Caco-2 (cell line): ENCODE measurements at regions of chr1 and their contacts with region 1.

Region 1: DNA sequence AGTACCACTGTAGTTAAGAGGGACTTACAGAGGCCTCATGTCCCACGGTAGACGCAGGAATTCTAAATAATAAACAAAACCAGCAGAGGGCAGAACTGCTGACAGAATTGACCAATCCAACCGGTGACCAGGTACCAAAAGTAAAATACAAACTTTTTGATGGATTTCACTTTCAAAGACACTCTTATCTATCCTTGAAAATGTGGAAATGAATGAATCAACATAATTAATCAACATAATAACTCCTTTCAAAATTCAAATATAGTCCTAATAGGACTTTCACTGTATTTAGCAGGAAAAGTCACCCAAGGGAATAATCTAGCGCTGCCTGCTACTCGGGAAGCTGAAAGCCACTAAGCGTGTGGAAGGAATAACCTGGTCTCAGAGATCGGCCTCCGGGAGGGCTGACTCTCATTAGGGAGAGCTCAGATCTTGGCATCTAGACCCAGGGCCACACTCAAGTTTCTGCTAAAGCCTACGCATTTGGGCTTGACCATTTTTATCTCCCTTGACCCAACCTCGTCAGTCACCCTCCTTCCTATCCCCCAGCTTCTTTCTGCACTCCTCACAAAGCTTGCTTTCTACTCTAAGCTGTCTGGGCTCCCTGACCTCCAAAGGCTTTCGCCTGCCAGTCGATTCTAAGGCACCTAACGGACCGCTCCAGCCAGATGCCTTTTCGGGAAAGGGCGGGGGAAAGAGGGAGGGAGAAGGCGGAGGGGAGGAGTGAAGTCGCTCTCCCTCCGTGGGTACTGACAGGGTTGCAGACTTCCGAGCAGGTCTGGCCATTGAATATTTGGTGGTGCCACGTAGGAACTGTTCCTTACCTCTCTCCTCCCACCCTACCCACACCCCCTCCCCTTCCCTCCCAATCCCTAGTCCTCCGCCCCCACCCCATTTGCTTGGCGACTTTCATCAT is 1.6 kb downstream of the COL11A1 start:
- DNase-seq: peak in 1 of 2 experiments; percentile 33
- H3K4me3 ChIP-seq: no peak overlapping the region
- H3K4me3 Mint-ChIP-seq: no peak overlapping the region
- H3K27ac Mint-ChIP-seq: no peak overlapping the region
- H3K4me1 ChIP-seq: no peaks in the 10 kb centered on the region
- H3K4me1 Mint-ChIP-seq: no peaks in the 10 kb centered on the region
- H3K27me3 ChIP-seq: no peaks in the 10 kb centered on the region
- H3K27me3 Mint-ChIP-seq: no peaks in the 10 kb centered on the region
- CTCF ChIP-seq: peak in 1 of 2 experiments; percentile 14

Region 2: DNA sequence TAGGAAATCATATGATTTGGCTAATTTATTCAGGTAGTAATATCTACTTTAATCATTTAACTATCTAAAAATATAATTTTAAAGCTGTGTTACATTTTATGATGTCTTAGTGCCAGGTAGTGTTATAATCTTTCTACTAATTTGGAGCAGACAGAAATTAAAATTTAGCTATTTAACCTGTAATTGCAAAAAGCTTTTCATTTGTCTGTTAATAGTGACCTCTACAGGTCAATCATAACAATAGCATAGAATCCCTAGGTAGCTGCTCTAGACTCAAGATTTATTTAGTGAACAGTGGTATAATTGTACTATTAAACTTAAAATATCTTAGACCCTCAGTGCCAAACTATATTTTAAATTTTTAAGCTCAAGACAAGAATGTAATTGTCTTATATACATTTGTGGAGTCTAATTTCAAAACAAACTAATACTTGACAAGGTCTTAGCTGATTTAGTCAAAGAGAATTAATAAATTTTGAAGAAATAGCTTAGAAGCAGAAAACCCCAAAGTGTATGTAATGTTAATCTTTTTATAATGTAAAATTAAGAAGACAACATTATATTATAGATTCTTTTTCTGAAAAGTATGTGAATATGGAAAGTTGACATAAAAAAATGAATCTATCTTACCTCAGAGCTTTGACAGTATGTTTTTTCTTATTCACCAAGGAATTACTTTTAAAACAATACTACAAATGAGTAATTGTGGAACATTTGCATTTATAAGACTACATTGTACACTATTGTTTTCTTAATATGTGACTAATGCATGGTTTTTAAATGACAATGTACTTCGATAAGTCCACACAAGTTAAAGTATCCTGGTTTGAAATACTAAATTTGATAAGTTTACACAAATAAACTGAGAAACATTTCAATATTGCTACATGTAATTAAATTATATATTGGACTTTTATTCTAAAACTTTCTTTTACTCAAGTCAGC is 354.7 kb after region 1 on chr1:
- CTCF ChIA-PET with region 1: interaction called, 9 read pairs
- POLR2A ChIA-PET with region 1: no interaction called
- intact Hi-C with region 1: loop called (anchors 1 kb)
- DNase-seq: no peak
- H3K4me3 ChIP-seq: no peak overlapping the region
- H3K4me3 Mint-ChIP-seq: no peak overlapping the region
- H3K27ac Mint-ChIP-seq: no peak overlapping the region
- H3K4me1 ChIP-seq: no peaks in the 10 kb centered on the region
- H3K4me1 Mint-ChIP-seq: no peaks in the 10 kb centered on the region
- H3K27me3 ChIP-seq: no peaks in the 10 kb centered on the region
- H3K27me3 Mint-ChIP-seq: no peaks in the 10 kb centered on the region
- CTCF ChIP-seq: peak; percentile 28 to 30

Region 3: DNA sequence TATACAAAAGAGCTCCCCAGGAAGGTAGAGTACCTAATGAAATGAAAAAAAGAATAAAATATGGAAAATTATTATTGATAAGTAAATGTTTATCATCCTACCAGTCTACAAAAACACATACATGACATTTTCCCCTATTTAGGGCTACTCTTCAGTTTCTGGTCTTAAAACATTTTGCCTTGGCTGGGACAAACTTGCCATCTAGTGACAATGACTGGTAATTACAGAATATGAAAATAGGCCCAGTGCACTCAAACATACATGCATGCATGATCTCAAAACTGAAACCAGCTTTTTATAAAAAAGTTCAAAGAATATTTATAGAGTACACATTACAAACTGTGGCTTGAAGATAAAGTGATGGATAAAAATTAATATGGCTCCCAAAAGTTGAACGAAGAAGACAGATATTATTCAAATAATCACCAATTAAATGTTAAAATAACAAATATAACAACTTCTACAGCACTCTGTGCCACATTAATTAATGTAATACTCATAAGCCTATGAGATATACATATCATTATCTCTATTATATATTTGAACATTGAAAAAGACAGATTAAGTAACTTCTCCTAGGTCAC is 408.3 kb after region 1 on chr1:
- CTCF ChIA-PET with region 1: no interaction called
- POLR2A ChIA-PET with region 1: no interaction called
- intact Hi-C with region 1: loop called (anchors 1 kb)
- DNase-seq: peak in 1 of 2 experiments; percentile 3
- H3K4me3 ChIP-seq: no peak overlapping the region
- H3K4me3 Mint-ChIP-seq: no peak overlapping the region
- H3K27ac Mint-ChIP-seq: no peak overlapping the region
- H3K4me1 ChIP-seq: no peaks in the 10 kb centered on the region
- H3K4me1 Mint-ChIP-seq: no peaks in the 10 kb centered on the region
- H3K27me3 ChIP-seq: no peaks in the 10 kb centered on the region
- H3K27me3 Mint-ChIP-seq: no peaks in the 10 kb centered on the region
- CTCF ChIP-seq: peak; percentile 33 to 52